Body of pancreas (tissue), 4 donors: ENCODE measurements at regions of chr1 and their contacts with region 1.

Region 1: GRCh38 chr1:155134858-155135414 is 716 bp upstream of the SLC50A1 start:
- DNase-seq: peak; percentile 92 to 97 (median 96)
- ATAC-seq: peak; percentile 76
- H3K4me3 ChIP-seq: no peak overlapping the region
- H3K27ac ChIP-seq: peak overlapping the region; percentile 94 to 99 (median 98)
- H3K4me1 ChIP-seq: peaks cover 88% of the 10 kb centered on the region
- H3K27me3 ChIP-seq: no peaks in the 10 kb centered on the region
- CTCF ChIP-seq: no peak
- POLR2A ChIP-seq: peak in 1 of 3 donors; percentile 3

Region 2: GRCh38 chr1:155167166-155168104 is 32.5 kb after region 1 on chr1:
- intact Hi-C with region 1: loop called (anchors 5 kb)
- DNase-seq: peak; percentile 90 to 91 (median 91)
- ATAC-seq: peak; percentile 85
- H3K4me3 ChIP-seq: no peak overlapping the region
- H3K27ac ChIP-seq: peak overlapping the region in 2 of 4 donors; percentile 2 to 45
- H3K4me1 ChIP-seq: peaks cover 17% of the 10 kb centered on the region
- H3K27me3 ChIP-seq: no peaks in the 10 kb centered on the region
- CTCF ChIP-seq: peak; percentile 79 to 95 (median 93)
- POLR2A ChIP-seq: no peak